ENCODE measurements at regions of chr17 and their contacts with region 1.

Region 1: DNA sequence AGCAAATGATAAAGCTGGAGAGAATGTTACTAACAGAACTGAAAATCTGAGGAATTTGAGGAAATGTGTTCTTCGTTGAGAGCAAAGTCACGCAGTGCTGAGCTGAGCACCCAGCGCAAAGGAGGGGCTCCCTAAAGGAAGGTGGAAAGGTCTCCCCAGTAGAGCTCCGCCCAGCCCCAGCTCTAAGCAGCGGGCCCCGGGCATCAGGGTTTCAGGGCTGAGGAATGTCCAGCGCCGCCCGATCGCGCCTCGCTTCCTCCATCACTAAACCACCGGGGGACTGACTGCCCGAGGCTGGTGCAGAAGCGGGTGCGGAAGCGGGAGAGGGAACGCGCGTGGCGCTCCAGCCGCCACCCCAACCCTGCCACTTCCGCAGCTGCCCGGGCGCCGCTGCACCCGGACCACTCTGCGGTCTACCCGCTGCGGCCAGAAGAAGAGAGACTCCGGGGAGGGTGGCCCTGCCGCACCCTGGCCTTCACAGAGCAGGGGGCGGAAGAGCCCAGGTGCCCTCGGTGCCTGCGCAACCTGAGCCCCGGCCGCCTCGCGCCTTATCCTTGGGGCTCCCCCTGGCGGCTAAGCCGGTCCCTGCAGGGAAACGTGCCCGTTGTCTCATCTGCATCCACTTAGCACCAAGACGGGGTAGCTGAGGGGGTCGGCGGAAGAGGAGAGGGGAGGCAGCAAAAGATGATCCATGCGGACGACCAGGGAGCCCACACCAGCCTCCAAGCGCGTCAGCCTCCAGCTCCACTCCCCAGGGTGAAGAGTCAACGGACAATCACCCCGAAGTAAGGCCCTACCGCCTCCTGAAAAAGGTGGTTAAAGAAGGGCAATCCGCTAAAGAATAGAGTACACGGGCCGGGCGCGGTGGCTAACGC is 12.4 kb upstream of the GUCY2D start:
- DNase-seq: peak; percentile 44
- ATAC-seq: peak; percentile 94
- H3K4me3 ChIP-seq: peak overlapping the region; percentile 59
- H3K27ac ChIP-seq: no peak overlapping the region
- H3K4me1 ChIP-seq: peaks cover 5% of the 10 kb centered on the region; the same call in 1 of the 2 replicates
- H3K27me3 ChIP-seq: peaks cover 11% of the 10 kb centered on the region
- CTCF ChIP-seq: peak; percentile 81
- POLR2A ChIP-seq: no peak
- RAD21 ChIP-seq: peak; percentile 57

Region 2: DNA sequence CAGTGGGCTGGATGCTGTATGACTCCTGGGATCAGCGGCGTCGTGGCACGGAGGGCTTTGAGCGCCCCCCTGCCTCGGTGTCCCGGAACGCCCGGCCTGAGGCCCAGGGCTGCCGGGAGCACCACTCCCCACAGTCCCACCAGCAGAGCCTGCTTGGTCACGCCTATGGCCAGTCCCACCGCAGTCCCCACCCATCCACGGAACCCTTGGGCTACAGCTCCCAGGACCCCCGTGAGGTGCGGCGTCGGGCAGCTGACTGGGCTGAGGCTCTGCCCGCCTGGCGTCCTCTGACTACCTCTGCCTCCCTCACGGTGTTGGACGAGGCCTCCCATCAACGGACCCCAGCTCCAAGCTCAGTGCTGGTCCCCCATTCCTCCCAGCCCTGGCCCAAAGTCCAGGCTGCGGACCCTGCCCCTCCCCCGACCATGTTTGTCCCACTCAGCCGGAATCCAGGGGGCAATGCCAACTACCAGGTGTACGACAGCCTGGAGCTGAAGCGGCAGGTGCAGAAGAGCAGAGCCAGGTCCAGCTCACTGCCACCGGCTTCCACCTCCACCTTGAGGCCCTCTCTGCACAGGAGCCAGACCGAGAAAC is 563.0 kb before region 1 on chr17:
- CTCF ChIA-PET with region 1: no interaction called
- POLR2A ChIA-PET with region 1: no interaction called
- dilution Hi-C with region 1: no loop called
- in situ Hi-C with region 1: no loop called
- intact Hi-C with region 1: no loop called
- DNase-seq: no peak
- ATAC-seq: no peak
- H3K4me3 ChIP-seq: no peak overlapping the region
- H3K27ac ChIP-seq: no peak overlapping the region
- H3K4me1 ChIP-seq: no peaks in the 10 kb centered on the region
- H3K27me3 ChIP-seq: peaks cover 2% of the 10 kb centered on the region; the same call in 1 of the 2 replicates
- CTCF ChIP-seq: no peak
- POLR2A ChIP-seq: no peak
- RAD21 ChIP-seq: no peak

Region 3: DNA sequence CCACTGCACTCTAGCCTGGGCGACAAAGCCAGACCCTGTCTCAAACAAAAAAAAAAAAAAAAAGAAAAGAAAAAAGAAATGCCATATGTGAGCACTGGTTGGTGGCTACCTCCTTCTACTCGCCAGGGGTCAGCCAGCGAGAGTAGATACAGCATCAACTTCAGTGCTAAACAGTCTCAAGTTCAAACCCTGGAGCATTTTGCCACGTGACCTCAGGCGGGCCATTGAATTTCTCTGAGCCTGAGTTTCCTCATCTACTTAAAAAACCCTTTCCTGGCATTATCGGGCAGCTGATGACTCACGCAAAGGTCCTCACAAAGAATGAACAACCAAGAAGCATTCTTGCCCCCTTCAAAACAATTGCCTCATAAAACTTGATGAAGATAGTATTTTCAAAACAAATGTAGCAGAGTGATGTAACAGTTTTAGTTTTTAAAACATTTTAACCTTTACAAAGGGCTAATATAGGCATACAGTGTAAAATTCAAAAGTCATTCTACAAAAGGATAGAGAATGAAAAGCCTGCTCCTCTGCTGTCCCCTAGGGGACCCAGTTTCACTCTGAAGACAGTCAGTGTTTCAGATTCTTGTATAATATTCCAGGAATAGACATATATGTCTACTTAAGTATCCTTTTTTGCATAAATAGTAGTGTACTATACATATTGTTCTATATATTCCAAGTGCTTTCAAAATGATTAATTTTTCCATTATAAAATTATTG is 244.1 kb before region 1 on chr17:
- CTCF ChIA-PET with region 1: interaction called, 4 read pairs
- POLR2A ChIA-PET with region 1: no interaction called
- dilution Hi-C with region 1: no loop called
- in situ Hi-C with region 1: loop called (anchors 25 kb)
- intact Hi-C with region 1: loop called (anchors 1 kb)
- DNase-seq: peak; percentile 76
- ATAC-seq: peak; percentile 21
- H3K4me3 ChIP-seq: no peak overlapping the region
- H3K27ac ChIP-seq: peak overlapping the region; percentile 5; the same call in 1 of the 2 replicates
- H3K4me1 ChIP-seq: peaks cover 21% of the 10 kb centered on the region
- H3K27me3 ChIP-seq: peaks cover under 1% of the 10 kb centered on the region
- CTCF ChIP-seq: 0 out of 2 replicates have a peak, but pooled peaks have one; percentile 13
- POLR2A ChIP-seq: no peak
- RAD21 ChIP-seq: no peak

Region 4: GRCh38 chr17:7862692-7863437 is 127.2 kb before region 1 on chr17:
- CTCF ChIA-PET with region 1: interaction called, 5 read pairs
- POLR2A ChIA-PET with region 1: no interaction called
- dilution Hi-C with region 1: no loop called
- in situ Hi-C with region 1: no loop called
- intact Hi-C with region 1: loop called (anchors 1 kb)
- DNase-seq: peak; percentile 54
- ATAC-seq: no peak
- H3K4me3 ChIP-seq: no peak overlapping the region
- H3K27ac ChIP-seq: no peak overlapping the region
- H3K4me1 ChIP-seq: peaks cover 7% of the 10 kb centered on the region
- H3K27me3 ChIP-seq: no peaks in the 10 kb centered on the region
- CTCF ChIP-seq: peak; percentile 75
- POLR2A ChIP-seq: no peak; the same call in 1 of the 2 replicates
- RAD21 ChIP-seq: peak; percentile 83

Region 5: DNA sequence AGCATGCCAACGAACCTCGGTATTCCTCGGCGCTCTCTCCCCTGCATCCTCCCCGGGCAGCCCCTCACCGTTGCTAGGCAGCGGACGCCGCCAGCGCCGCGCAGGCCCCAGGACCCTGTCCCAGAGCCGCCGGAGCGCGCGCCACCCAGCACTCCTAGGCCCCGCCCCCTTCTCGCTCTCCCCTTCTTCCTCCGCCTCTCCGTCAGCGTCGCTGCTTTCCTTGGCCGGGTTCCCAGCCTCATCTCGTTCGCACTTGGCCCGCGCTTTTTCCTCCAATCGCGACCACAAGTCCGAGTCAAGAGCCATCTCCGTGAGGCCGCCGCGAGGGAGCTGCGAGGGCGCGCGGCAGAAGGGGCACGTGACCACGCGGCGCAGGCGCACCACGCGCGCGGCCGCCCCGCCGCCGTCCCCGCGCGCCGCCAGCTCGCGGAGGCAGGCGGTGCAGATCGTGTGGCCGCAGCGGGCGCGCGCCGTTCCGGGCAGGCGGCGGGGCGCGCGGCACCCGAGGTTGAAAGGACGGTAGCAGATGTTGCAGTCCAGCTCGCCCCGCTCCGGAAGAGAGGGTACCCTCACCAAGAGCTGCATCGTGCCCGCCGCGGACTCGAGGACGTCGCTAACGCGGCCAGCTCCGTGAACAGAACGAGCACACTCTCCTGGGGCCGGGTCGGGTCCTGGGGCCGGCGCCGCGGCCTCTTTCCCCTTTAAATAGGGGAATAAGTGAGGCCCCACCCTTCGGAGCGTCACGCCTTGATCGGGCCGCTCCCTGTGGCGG is 74.2 kb before region 1 on chr17 and contains the start of gene RNF227:
- CTCF ChIA-PET with region 1: interaction called, 18 read pairs
- POLR2A ChIA-PET with region 1: no interaction called
- dilution Hi-C with region 1: no loop called
- in situ Hi-C with region 1: loop called (anchors 5 kb)
- intact Hi-C with region 1: loop called (anchors 1 kb)
- DNase-seq: peak; percentile 96
- ATAC-seq: peak; percentile 84
- H3K4me3 ChIP-seq: peak within 1 kb of the TSS; percentile 61
- H3K27ac ChIP-seq: peak within 1 kb of the TSS; percentile 90
- H3K4me1 ChIP-seq: peaks cover 12% of the 10 kb centered on the region
- H3K27me3 ChIP-seq: no peaks in the 10 kb centered on the region
- CTCF ChIP-seq: no peak
- POLR2A ChIP-seq: peak; percentile 71
- RAD21 ChIP-seq: no peak
- total RNA-seq, gene RNF227: 1.3 and 1.4 TPM in 2 replicates

Region 6: GRCh38 chr17:8041249-8041928 is 51.4 kb after region 1 on chr17:
- CTCF ChIA-PET with region 1: interaction called, 8 read pairs
- POLR2A ChIA-PET with region 1: no interaction called
- dilution Hi-C with region 1: no loop called
- in situ Hi-C with region 1: no loop called
- intact Hi-C with region 1: loop called (anchors 1 kb)
- DNase-seq: peak; percentile 73
- ATAC-seq: peak; percentile 84
- H3K4me3 ChIP-seq: no peak overlapping the region
- H3K27ac ChIP-seq: no peak overlapping the region
- H3K4me1 ChIP-seq: no peaks in the 10 kb centered on the region
- H3K27me3 ChIP-seq: peaks cover 47% of the 10 kb centered on the region
- CTCF ChIP-seq: peak; percentile 73
- POLR2A ChIP-seq: no peak
- RAD21 ChIP-seq: peak; percentile 83

Region 7: GRCh38 chr17:8222630-8223356 is 232.8 kb after region 1 on chr17:
- CTCF ChIA-PET with region 1: no interaction called
- POLR2A ChIA-PET with region 1: no interaction called
- dilution Hi-C with region 1: no loop called
- in situ Hi-C with region 1: no loop called
- intact Hi-C with region 1: no loop called
- DNase-seq: peak; percentile 93
- ATAC-seq: peak; percentile 40
- H3K4me3 ChIP-seq: peak overlapping the region; percentile 62
- H3K27ac ChIP-seq: peak overlapping the region; percentile 85
- H3K4me1 ChIP-seq: peaks cover 9% of the 10 kb centered on the region
- H3K27me3 ChIP-seq: no peaks in the 10 kb centered on the region
- CTCF ChIP-seq: no peak
- POLR2A ChIP-seq: peak; percentile 77; the same call in 1 of the 2 replicates
- RAD21 ChIP-seq: no peak

Measured in IMR-90 (cell line).